Ovary (tissue), 10 donors: ENCODE measurements at regions of chr6 and their contacts with region 1.

Region 1: DNA sequence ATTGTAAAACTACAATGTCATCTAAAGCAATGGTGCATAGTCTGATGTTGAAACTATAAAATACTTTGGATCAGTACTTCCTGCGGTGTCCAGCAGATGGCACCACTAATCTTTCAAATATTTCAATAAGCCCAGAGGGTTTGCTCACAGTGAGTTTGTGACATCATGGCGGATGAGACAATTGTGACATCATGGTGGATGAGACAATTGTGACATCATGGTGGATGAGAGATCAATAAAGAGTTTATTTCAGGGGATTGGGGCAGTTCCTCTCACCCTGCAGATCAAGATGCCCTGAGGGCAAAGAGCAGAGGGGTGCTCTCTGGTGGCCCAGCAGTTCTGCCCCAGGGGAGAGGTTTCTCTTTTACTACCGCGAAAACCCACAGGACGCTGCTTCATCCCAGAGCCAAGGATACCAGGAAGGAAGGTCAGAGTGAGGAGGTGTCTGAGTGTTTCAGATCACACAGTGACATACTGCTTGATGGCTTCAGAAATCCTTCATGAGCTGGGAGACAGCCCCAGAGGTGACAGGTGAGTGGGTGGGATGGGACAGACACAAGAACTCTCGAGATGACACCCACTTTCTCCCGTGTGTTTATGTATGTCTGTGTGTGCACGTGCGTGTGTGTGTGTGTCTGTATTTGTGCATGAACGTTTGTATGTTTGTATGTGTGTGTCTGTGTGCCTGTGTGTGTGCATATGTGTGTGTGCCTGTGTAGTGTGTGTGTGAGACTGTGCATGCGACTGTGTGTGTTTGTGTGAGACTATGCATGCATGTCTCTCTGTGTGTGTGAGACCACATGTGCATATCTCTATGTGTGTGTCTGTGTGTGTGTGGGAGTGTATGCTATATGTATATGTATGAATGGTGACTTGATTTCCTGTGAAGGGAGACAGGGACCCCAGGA is 7.3 kb upstream of the ULBP2 start:
- DNase-seq: peak in 4 of 5 donors; percentile 39 to 72 (median 54)
- H3K4me3 ChIP-seq: no peak overlapping the region
- H3K27ac ChIP-seq: no peak overlapping the region
- H3K4me1 ChIP-seq: no peaks in the 10 kb centered on the region
- H3K27me3 ChIP-seq: no peaks in the 10 kb centered on the region
- CTCF ChIP-seq: peak; percentile 44 to 70 (median 67)
- EP300 ChIP-seq: no peak
- POLR2A ChIP-seq: no peak

Region 2: GRCh38 chr6:149974825-149975224 is 40.3 kb after region 1 on chr6:
- intact Hi-C with region 1: no loop called
- DNase-seq: no peak
- H3K4me3 ChIP-seq: no peak overlapping the region
- H3K27ac ChIP-seq: no peak overlapping the region
- H3K4me1 ChIP-seq: no peaks in the 10 kb centered on the region
- H3K27me3 ChIP-seq: no peaks in the 10 kb centered on the region
- CTCF ChIP-seq: no peak
- EP300 ChIP-seq: no peak
- POLR2A ChIP-seq: no peak

Region 3: DNA sequence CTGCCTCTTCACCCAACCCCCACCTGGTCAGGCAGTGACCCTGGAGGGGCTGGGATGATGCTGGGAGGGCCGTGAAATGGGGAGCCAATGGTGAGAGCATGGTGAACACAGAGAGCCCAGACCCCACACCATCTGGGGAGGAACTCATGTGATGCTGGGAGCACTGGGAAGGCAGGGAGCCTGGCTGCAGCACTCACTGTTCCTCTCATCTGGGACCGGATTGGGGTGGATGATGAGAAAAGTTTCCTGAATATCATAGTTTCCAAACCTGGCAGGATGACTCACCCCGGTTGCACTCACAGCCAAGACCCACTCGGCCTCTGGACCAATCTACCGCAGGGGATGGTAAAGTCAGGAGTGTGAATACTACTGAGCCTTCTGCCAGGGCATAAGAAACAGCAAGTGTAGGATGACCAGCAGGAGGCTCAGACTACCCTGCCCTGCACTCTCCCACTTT is 51.0 kb after region 1 on chr6:
- intact Hi-C with region 1: no loop called
- DNase-seq: no peak
- H3K4me3 ChIP-seq: no peak overlapping the region
- H3K27ac ChIP-seq: no peak overlapping the region
- H3K4me1 ChIP-seq: peaks cover 2% of the 10 kb centered on the region
- H3K27me3 ChIP-seq: no peaks in the 10 kb centered on the region
- CTCF ChIP-seq: no peak
- EP300 ChIP-seq: no peak
- POLR2A ChIP-seq: no peak

Region 4: DNA sequence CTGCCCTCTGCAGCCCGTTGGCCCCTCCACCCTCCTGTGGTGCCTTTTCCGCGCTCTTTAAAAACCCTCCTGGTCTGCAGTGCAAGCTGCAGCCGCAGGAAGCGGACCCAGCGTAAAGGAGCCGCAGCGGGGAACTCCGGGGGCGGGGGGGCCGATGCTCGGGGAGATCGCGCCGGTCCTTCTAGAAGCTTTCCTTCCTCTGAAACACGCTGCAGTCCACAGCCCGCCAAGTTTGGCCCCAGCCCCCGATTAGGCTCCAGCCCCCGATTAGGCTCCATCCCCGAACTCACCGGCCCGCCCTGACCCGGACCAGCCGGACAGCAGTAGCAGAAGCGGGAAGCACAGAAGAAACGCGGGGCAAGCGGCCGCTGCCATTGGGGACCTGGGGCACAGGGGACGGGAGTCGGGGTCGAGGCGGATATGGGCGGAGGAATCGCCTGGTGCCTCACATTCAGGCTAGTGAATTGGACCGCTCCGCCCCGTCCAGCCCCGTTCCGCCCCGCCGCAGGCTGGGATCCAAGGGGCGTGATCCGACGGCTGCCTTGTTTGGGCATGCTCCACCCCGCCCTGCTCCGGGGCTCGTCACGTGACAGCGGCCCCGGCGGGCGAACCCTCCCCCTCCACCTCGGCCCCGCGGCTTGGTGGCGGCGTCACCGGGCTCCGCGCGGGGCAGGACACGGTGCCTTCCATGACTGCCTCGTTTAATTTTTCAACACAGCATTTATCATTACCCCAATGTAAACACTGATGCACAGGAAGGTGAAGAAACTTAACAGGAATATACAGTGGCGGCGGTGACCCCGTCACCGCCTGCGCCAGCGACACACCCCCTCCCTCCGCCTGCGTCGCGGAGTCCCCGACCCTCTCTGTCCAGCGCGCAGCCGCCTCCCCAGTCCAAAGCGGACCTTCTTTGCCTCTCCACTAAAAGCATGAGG is 70.5 kb after region 1 on chr6:
- intact Hi-C with region 1: loop called in 1 of 4 experiments (anchors 5 kb)
- DNase-seq: peak; percentile 87 to 93 (median 91)
- H3K4me3 ChIP-seq: peak overlapping the region; percentile 54
- H3K27ac ChIP-seq: no peak overlapping the region
- H3K4me1 ChIP-seq: peaks cover 3% of the 10 kb centered on the region
- H3K27me3 ChIP-seq: no peaks in the 10 kb centered on the region
- CTCF ChIP-seq: no peak
- EP300 ChIP-seq: no peak
- POLR2A ChIP-seq: no peak

Region 5: GRCh38 chr6:150016324-150017185 is 82.1 kb after region 1 on chr6:
- intact Hi-C with region 1: loop called in 3 of 4 experiments (anchors 2 to 5 kb)
- DNase-seq: peak in 3 of 5 donors; percentile 39 to 46 (median 42)
- H3K4me3 ChIP-seq: no peak overlapping the region
- H3K27ac ChIP-seq: no peak overlapping the region
- H3K4me1 ChIP-seq: no peaks in the 10 kb centered on the region
- H3K27me3 ChIP-seq: no peaks in the 10 kb centered on the region
- CTCF ChIP-seq: peak; percentile 39 to 55 (median 53)
- EP300 ChIP-seq: no peak
- POLR2A ChIP-seq: no peak

Region 6: GRCh38 chr6:150478651-150479545 is 544.4 kb after region 1 on chr6:
- intact Hi-C with region 1: no loop called
- DNase-seq: no peak
- H3K4me3 ChIP-seq: no peak overlapping the region
- H3K27ac ChIP-seq: no peak overlapping the region
- H3K4me1 ChIP-seq: peaks cover 2% of the 10 kb centered on the region
- H3K27me3 ChIP-seq: no peaks in the 10 kb centered on the region
- CTCF ChIP-seq: no peak
- EP300 ChIP-seq: no peak
- POLR2A ChIP-seq: no peak